AG04449 (cell line): ENCODE measurements at regions of chr19 and their contacts with region 1.

Region 1: GRCh38 chr19:50724522-50725217 is 1.5 kb downstream of the CLEC11A start:
- DNase-seq: peak; percentile 95
- H3K4me3 ChIP-seq: peak overlapping the region; percentile 92
- CTCF ChIP-seq: peak; percentile 92

Region 2: DNA sequence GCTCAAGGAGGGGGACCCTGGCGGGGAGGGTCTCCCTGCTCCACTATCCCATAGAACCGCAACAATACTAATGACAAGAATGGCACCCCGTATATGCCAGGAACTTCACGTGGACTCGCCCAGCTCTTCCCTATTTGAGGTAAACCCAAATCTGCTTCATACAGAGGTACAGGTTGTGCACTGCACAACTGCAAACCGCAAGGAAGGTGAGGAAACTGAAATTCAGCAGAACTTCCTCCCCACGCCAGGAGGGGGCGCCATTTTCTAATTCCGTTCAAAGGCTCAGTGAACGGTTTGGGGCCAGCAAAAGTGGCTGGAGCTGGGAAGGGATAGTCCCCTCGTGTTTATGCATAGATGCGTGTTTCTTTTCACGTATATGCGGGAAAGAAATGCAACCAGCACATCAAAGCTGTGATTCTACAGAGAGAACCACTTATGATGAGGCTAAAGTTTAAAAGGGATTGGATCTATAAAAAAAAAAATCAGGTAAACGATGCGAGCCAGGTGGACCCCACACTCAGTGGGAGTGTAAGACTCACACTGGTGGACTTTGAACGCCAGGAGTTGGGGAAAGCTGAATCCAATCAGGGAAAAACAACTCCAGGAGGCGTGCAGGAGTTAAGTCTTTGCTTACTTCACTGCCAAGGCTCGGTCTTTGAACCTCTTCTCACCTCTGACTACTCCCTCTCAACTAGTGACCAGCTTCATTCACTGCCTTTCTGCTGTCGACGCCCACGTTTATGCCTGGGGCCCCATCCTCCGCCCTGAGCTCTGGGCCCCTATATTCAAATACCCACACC is 55.2 kb before region 1 on chr19:
- CTCF ChIA-PET with region 1: interaction called, 11 read pairs
- POLR2A ChIA-PET with region 1: interaction called, 3 read pairs
- DNase-seq: no peak
- H3K4me3 ChIP-seq: no peak overlapping the region
- CTCF ChIP-seq: peak; percentile 83

Region 3: GRCh38 chr19:50705422-50706019 is 19.1 kb before region 1 on chr19:
- CTCF ChIA-PET with region 1: interaction called, 61 read pairs
- POLR2A ChIA-PET with region 1: interaction called, 5 read pairs
- DNase-seq: no peak
- H3K4me3 ChIP-seq: no peak overlapping the region
- CTCF ChIP-seq: peak; percentile 84

Region 4: DNA sequence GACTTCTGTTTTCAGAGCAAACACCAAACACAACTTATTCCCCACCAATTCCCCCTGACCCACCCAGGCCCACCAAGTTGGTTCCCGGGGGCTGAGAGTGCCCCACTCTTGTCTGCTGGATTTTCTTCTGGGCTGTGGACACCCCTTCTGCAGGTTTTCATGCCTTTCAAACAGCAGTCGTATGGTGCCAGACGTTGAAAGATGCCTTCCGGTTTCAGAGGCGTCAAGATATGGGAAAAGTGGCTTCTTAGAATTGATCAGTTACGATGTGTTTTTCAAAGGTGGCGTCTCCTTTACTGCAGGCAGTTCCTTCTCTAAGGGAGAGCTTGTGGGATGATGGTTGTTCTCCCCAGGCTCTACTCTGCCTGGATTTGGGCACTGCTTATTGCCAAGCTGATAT is 11.2 kb after region 1 on chr19:
- CTCF ChIA-PET with region 1: interaction called, 18 read pairs
- POLR2A ChIA-PET with region 1: interaction called, 3 read pairs
- DNase-seq: no peak
- H3K4me3 ChIP-seq: no peak overlapping the region
- CTCF ChIP-seq: no peak

Region 5: GRCh38 chr19:50785329-50785728 is 60.7 kb after region 1 on chr19:
- CTCF ChIA-PET with region 1: interaction called, 18 read pairs
- POLR2A ChIA-PET with region 1: no interaction called
- DNase-seq: no peak
- H3K4me3 ChIP-seq: no peak overlapping the region
- CTCF ChIP-seq: no peak

Region 6: GRCh38 chr19:50870417-50871089 is 145.9 kb after region 1 on chr19:
- CTCF ChIA-PET with region 1: no interaction called
- POLR2A ChIA-PET with region 1: no interaction called
- DNase-seq: no peak
- H3K4me3 ChIP-seq: no peak overlapping the region
- CTCF ChIP-seq: no peak